Activated T-helper 1 cell treated with anti-CD3 and anti-CD28 coated beads, Interleukin-12 subunit alpha, Interleukin-12 subunit beta, Interleukin-2, Interleukin-4 antibody, amounts not matched to agents 30 ng/mL and 10 ng/mL and 1 ng/mL, durations not matched to agents 14 hours and 24 hours and 36 hours (primary cell): ENCODE measurements at regions of chr9 and their contacts with region 1.

Region 1: GRCh38 chr9:92048924-92049625 is 66.1 kb downstream of the SPTLC1 start:
- DNase-seq: no peak
- H3K4me3 Mint-ChIP-seq: no peak overlapping the region
- H3K27ac Mint-ChIP-seq: no peak overlapping the region
- H3K4me1 Mint-ChIP-seq: no peaks in the 10 kb centered on the region
- H3K27me3 Mint-ChIP-seq: no peaks in the 10 kb centered on the region

Region 2: GRCh38 chr9:91992461-91993041 is 56.5 kb before region 1 on chr9:
- intact Hi-C with region 1: loop called (anchors 2 kb)
- DNase-seq: no peak
- H3K4me3 Mint-ChIP-seq: no peak overlapping the region
- H3K27ac Mint-ChIP-seq: no peak overlapping the region
- H3K4me1 Mint-ChIP-seq: no peaks in the 10 kb centered on the region
- H3K27me3 Mint-ChIP-seq: peaks cover 30% of the 10 kb centered on the region

Region 3: DNA sequence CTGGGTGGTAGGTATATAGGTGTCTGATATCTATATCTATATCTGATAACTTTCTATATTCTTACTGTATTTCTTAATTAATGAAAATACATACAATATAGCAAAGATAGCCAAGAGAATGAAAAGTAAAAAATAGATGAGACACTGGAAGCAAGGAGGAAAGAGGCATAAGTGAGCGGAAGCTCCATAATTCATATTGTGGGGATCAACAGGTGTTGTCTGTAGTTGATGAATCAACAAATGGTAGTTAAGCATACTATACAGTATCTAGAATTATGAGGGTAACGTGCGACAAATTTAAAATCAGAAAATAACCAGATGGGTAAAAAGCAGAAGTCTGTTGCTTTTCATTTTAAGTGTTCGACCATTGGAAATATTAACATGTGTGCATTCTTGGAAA is 59.0 kb after region 1 on chr9:
- intact Hi-C with region 1: no loop called
- DNase-seq: no peak
- H3K4me3 Mint-ChIP-seq: no peak overlapping the region
- H3K27ac Mint-ChIP-seq: no peak overlapping the region
- H3K4me1 Mint-ChIP-seq: peaks cover 20% of the 10 kb centered on the region
- H3K27me3 Mint-ChIP-seq: no peaks in the 10 kb centered on the region